ENCODE measurements at regions of chr1 and their contacts with region 1.

Region 1: DNA sequence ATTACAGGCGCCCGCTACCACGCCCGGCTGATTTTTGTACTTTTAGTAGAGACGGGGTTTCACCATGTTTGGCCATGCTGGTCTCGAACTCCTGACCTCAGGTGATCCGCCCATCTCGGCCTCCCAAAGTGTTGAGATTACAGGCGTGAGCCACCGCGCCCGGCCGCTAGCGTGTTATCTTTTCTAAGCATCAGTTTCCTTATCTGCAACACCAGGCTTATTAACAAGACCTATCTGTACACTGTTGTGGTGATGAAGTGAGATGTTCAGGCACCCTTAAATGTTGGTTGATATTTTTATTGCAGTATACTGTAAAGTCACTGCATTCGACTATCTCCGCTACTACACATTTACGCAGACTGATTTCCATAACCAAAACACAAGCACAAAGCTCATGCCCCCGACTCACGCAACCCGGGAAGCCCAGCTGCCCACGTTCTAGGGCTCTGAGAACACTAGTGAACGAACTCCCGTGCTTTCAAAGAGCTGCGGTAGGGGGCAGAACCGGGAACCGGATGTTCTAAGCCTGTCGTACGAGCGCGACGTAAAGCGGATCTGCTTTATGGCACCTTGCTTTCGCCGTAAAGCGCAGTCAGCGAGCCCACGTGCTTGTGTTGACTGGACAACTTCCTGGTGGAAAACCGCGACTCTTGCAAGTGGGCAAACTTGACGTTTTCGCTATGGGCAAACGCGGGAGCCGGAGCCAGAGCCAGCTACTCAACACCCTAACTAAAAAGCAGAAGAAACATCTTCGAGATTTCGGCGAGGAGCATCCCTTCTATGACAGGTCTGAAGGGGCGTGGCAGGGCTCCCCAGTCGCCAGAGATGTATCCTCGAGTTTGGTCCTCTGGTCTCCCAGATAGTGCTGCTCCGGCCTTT is at the start of gene UTP25:
- DNase-seq: peak; percentile 96
- ATAC-seq: peak; percentile 86
- H3K4me3 Mint-ChIP-seq: peak within 1 kb of the TSS; percentile 87
- H3K27ac Mint-ChIP-seq: peak within 1 kb of the TSS; percentile 92
- H3K4me1 Mint-ChIP-seq: peaks cover 45% of the 10 kb centered on the region
- H3K27me3 Mint-ChIP-seq: peaks cover 4% of the 10 kb centered on the region
- total RNA-seq, gene UTP25: 9.4 to 10.4 TPM

Region 2: GRCh38 chr1:207868774-207869721 is 1958.6 kb before region 1 on chr1:
- CTCF ChIA-PET with region 1: no interaction called
- POLR2A ChIA-PET with region 1: no interaction called
- intact Hi-C with region 1: loop called in 1 of 2 experiments (anchors 5 kb)
- DNase-seq: peak; percentile 82
- ATAC-seq: peak; percentile 49
- H3K4me3 Mint-ChIP-seq: peak overlapping the region; percentile 90
- H3K27ac Mint-ChIP-seq: peak overlapping the region; percentile 94
- H3K4me1 Mint-ChIP-seq: peaks cover 84% of the 10 kb centered on the region
- H3K27me3 Mint-ChIP-seq: no peaks in the 10 kb centered on the region

Region 3: GRCh38 chr1:209389258-209389657 is 438.4 kb before region 1 on chr1:
- CTCF ChIA-PET with region 1: no interaction called
- POLR2A ChIA-PET with region 1: no interaction called
- intact Hi-C with region 1: no loop called
- DNase-seq: no peak
- ATAC-seq: peak; percentile 61
- H3K4me3 Mint-ChIP-seq: no peak overlapping the region
- H3K27ac Mint-ChIP-seq: no peak overlapping the region
- H3K4me1 Mint-ChIP-seq: no peaks in the 10 kb centered on the region
- H3K27me3 Mint-ChIP-seq: peaks cover 4% of the 10 kb centered on the region

Region 4: GRCh38 chr1:209747580-209748262 is 79.9 kb before region 1 on chr1:
- CTCF ChIA-PET with region 1: interaction called, 8 read pairs
- POLR2A ChIA-PET with region 1: no interaction called
- intact Hi-C with region 1: loop called in 1 of 2 experiments (anchors 2 kb)
- DNase-seq: peak; percentile 93
- ATAC-seq: peak; percentile 74
- H3K4me3 Mint-ChIP-seq: peak overlapping the region; percentile 65
- H3K27ac Mint-ChIP-seq: peak overlapping the region; percentile 92
- H3K4me1 Mint-ChIP-seq: peaks cover 70% of the 10 kb centered on the region
- H3K27me3 Mint-ChIP-seq: no peaks in the 10 kb centered on the region

Region 5: DNA sequence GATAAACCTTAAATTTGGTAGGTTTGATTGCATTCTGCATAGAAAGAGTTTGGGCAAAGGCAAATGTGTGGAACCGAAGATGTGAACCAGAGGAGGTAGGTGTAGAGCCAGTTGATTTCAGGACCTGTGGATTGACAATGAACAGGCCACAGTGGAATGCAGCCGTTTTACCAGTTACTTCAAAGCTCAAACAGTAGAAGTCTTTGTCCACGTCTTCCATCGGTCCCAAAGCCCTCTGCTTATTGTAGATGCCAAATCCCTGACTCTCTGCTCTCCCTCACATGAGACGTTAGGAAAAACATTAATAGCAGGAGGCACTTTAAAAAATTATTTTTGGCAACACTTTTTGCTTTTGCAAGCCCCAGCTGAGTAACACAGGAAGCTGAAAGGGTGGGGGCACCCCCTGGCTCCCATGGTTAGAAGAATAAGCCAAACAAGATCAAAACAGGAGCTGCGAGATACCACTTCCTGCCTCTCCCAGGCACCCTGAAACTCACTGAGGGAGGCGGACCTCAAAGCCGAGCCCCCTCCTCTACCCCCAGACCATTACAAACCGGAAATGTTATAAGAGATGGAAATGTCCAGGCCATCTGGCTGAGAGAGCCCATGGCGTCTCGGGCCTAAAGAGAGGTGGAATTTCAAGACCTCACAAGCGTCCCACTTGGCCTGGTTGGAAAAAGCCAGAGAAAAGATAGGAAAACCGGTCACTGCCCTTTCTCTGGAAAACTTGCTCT is 58.3 kb before region 1 on chr1:
- CTCF ChIA-PET with region 1: interaction called, 24 read pairs
- POLR2A ChIA-PET with region 1: interaction called, 4 read pairs
- intact Hi-C with region 1: loop called (anchors 1 to 2 kb)
- DNase-seq: peak; percentile 88
- ATAC-seq: peak; percentile 67
- H3K4me3 Mint-ChIP-seq: no peak overlapping the region
- H3K27ac Mint-ChIP-seq: no peak overlapping the region
- H3K4me1 Mint-ChIP-seq: peaks cover 48% of the 10 kb centered on the region
- H3K27me3 Mint-ChIP-seq: no peaks in the 10 kb centered on the region

Region 6: DNA sequence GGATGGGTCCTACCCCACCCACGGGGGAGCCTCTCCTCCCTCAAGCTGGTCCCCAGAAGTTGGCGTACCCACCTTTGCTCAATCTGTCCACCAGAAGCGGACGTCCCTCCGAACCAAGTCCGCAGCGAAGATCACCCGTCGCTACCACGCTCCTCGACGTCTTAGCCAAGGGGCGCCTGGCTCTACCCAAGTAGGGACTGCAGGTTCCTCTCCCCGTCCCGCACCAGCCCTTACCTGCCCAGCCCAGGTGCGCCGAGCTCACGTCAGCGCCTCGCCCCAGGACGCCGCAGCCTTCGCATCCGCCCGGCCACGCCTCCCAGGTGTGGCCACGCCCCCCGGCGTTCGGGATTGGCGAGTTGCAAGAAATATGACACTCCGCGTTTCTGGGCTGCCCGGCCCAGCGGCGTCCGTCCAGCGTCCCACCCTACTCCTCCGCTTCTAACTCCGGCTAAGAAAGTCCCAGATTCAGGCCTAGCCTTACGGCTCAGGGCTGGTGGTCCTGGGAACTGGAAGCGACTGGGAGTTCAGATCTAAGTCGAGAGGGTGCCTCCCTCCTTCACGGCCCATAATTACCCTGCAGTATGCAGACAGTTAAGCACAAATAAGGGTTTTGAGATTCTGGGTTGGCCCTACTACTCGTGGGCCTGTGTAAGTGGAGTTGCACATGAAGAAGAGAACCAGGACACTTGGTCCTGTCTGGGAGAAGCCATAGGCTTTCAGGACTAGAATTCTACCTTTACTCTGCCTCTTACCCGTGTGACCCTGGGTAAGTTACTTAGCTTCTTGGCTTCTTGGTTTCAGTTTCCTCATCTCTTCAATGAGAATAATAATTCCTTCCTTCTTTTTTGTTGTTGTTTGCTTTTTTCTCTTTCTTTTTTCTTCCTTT is 21.5 kb before region 1 on chr1 and contains the start of gene IRF6:
- CTCF ChIA-PET with region 1: interaction called, 31 read pairs
- POLR2A ChIA-PET with region 1: no interaction called
- intact Hi-C with region 1: no loop called
- DNase-seq: peak; percentile 64
- ATAC-seq: peak; percentile 73
- H3K4me3 Mint-ChIP-seq: peak within 1 kb of the TSS; percentile 54
- H3K27ac Mint-ChIP-seq: no peak within 1 kb of the TSS
- H3K4me1 Mint-ChIP-seq: peaks cover 14% of the 10 kb centered on the region
- H3K27me3 Mint-ChIP-seq: peaks cover 16% of the 10 kb centered on the region
- total RNA-seq, gene IRF6: 0.11 to 0.14 TPM

Region 7: GRCh38 chr1:209850342-209850979 is 22.8 kb after region 1 on chr1:
- CTCF ChIA-PET with region 1: interaction called, 14 read pairs
- POLR2A ChIA-PET with region 1: no interaction called
- intact Hi-C with region 1: no loop called
- DNase-seq: peak; percentile 69
- ATAC-seq: peak; percentile 61
- H3K4me3 Mint-ChIP-seq: no peak overlapping the region
- H3K27ac Mint-ChIP-seq: no peak overlapping the region
- H3K4me1 Mint-ChIP-seq: peaks cover 2% of the 10 kb centered on the region
- H3K27me3 Mint-ChIP-seq: no peaks in the 10 kb centered on the region